Right ventricle myocardium superior (tissue), 1 donor: ENCODE measurements at regions of chr1 and their contacts with region 1.

Region 1: GRCh38 chr1:192477630-192478029 is 97.9 kb upstream of the RGS1 start:
- DNase-seq: no peak
- ATAC-seq: peak; percentile 80

Region 2: GRCh38 chr1:192580351-192580962 is 102.8 kb after region 1 on chr1:
- intact Hi-C with region 1: loop called (anchors 10 kb)
- DNase-seq: no peak
- ATAC-seq: peak; percentile 88

Region 3: DNA sequence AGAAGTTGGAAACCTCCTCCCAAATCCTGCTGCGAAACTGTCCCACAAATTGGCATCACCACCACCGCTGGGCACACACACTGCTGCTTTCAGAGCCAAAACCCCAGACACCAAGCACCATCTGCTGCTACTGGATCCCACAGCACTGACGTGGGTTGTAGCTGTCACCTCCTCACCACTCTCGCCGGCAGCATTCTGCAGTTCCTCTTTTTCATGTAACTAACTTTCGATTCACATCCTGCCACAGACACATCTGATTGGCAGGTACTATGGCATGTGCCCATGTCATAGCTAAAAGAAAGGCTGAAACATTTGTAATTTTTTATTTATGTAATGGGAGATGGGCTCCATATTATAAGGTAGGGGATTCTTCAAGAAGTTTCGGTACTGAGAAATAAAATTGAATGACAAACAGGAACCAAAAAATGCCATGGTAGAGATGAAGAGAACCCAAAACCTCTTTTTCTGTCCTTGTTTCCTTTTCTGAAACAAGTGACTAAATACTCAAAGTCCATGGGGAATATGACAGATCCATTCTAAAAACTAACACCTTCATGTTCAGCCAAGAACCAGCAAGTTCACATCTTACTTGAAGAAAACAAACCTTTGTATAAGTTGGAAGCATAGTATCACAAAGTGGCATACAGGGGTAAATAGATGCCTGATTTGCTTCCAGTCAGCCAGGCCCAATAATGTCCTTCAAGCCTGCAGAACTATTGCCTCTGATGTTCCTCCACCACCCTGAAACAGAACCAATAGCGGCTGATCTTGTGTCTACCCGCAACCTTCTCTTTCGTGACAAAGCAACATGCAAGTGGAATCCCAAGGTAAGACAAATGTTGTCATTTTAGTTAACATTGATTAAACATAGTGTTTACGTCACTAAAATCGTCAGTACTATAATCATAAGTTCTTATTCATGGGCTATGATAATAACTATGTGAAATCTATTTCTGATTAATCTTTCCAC is 131.8 kb after region 1 on chr1:
- intact Hi-C with region 1: loop called (anchors 2 kb)
- DNase-seq: peak; percentile 57
- ATAC-seq: no peak

Region 4: GRCh38 chr1:193019442-193020026 is 541.9 kb after region 1 on chr1:
- intact Hi-C with region 1: loop called (anchors 5 kb)
- DNase-seq: no peak
- ATAC-seq: peak; percentile 83

Region 5: GRCh38 chr1:193121616-193122593 is 644.3 kb after region 1 on chr1 and contains the start of gene CDC73:
- intact Hi-C with region 1: loop called (anchors 10 kb)
- DNase-seq: peak; percentile 99
- ATAC-seq: peak; percentile 99
- total RNA-seq, gene CDC73: 52.9 TPM